GM12878 (cell line): ENCODE measurements at regions of chr11 and their contacts with region 1.

Region 1: GRCh38 chr11:58629857-58630256 is 7.4 kb downstream of the CNTF start:
- DNase-seq: no peak
- ATAC-seq: peak; percentile 86
- H3K4me3 ChIP-seq: no peak overlapping the region
- H3K27ac ChIP-seq: no peak overlapping the region
- H3K4me1 ChIP-seq: no peaks in the 10 kb centered on the region
- H3K27me3 ChIP-seq: no peaks in the 10 kb centered on the region
- CTCF ChIP-seq: peak; percentile 59 to 70 (median 66)
- EP300 ChIP-seq: no peak
- POLR2A ChIP-seq: no peak
- RAD21 ChIP-seq: peak; percentile 72

Region 2: DNA sequence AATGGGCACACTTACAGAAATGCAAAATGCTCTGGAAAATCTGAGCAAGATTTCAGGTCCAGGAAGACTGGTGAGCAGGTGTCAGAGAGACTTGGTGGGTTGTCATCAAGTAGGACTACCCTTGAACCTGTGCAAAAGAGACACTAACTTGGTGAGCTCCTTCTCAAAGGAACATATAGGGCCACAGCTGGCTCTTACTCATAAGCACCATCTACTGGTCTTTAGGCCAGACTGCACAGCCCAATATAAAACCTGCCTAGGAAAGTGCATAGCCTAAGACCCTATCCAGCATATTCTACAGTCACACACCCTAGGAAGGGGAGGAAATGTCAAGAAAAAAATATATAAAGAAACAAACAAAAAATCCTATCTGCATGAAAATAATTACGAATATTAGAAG is 343.6 kb before region 1 on chr11:
- CTCF ChIA-PET with region 1: no interaction called
- POLR2A ChIA-PET with region 1: no interaction called
- RAD21 ChIA-PET with region 1: no interaction called
- SMC1A ChIA-PET with region 1: no interaction called
- in situ Hi-C with region 1: no loop called
- intact Hi-C with region 1: no loop called
- DNase-seq: no peak
- ATAC-seq: peak; percentile 89
- H3K4me3 ChIP-seq: no peak overlapping the region
- H3K27ac ChIP-seq: no peak overlapping the region
- H3K4me1 ChIP-seq: no peaks in the 10 kb centered on the region
- H3K27me3 ChIP-seq: no peaks in the 10 kb centered on the region
- CTCF ChIP-seq: peak; percentile 61 to 68 (median 62)
- EP300 ChIP-seq: no peak
- POLR2A ChIP-seq: no peak
- RAD21 ChIP-seq: peak; percentile 65

Region 3: GRCh38 chr11:58524232-58525036 is 105.4 kb before region 1 on chr11:
- CTCF ChIA-PET with region 1: interaction called, 26 read pairs
- POLR2A ChIA-PET with region 1: no interaction called
- RAD21 ChIA-PET with region 1: interaction called, 6 read pairs
- SMC1A ChIA-PET with region 1: interaction called, 4 read pairs
- in situ Hi-C with region 1: no loop called
- intact Hi-C with region 1: no loop called
- DNase-seq: peak; percentile 39
- ATAC-seq: peak; percentile 68
- H3K4me3 ChIP-seq: peak overlapping the region; percentile 49; the same call in 1 of the 2 replicates
- H3K27ac ChIP-seq: peak overlapping the region; percentile 75
- H3K4me1 ChIP-seq: peaks cover 30% of the 10 kb centered on the region
- H3K27me3 ChIP-seq: no peaks in the 10 kb centered on the region
- CTCF ChIP-seq: peak; percentile 70 to 77 (median 72)
- EP300 ChIP-seq: no peak
- POLR2A ChIP-seq: peak; percentile 21; the same call in 1 of the 2 replicates
- RAD21 ChIP-seq: peak; percentile 72

Region 4: DNA sequence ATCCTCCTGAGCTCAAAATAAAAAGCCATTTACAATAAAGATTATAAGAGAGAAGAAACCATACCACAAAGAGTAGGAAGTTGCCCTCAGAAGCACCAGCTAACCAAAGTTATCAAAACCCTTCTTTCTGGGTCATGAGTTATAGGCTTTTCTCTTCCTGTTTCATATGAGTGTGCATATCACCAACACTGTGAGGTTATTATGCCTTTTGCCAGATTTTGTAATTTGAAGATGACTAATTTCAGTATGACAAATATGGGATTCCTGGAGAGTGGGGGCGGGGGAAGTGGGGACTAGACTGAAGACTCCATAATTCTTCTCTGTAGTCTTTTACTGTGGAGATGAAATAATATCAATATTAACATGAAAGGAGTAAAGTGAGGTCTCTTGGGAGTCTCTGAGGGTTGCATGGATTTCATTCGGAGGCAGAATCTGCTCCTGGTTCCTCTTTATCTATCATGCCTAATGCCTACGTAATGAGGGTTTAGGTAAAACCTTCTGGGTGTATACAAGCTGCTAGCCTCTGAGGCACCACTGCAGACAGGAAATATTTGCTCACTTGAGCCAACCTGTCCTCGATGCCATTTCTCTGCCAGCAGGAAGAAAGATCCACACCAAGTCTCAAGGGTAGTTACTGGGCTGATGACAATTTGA is 56.3 kb before region 1 on chr11:
- CTCF ChIA-PET with region 1: interaction called, 156 read pairs
- POLR2A ChIA-PET with region 1: interaction called, 11 read pairs
- RAD21 ChIA-PET with region 1: interaction called, 61 read pairs
- SMC1A ChIA-PET with region 1: interaction called, 73 read pairs
- in situ Hi-C with region 1: no loop called
- intact Hi-C with region 1: loop called (anchors 5 kb)
- DNase-seq: no peak
- ATAC-seq: peak; percentile 41
- H3K4me3 ChIP-seq: peak overlapping the region; percentile 77
- H3K27ac ChIP-seq: peak overlapping the region; percentile 99
- H3K4me1 ChIP-seq: peaks cover 9% of the 10 kb centered on the region
- H3K27me3 ChIP-seq: no peaks in the 10 kb centered on the region
- CTCF ChIP-seq: no peak
- EP300 ChIP-seq: peak in 1 of 2 experiments; percentile 62; a peak in 3 of 4 replicates
- POLR2A ChIP-seq: peak; percentile 69
- RAD21 ChIP-seq: no peak

Region 5: DNA sequence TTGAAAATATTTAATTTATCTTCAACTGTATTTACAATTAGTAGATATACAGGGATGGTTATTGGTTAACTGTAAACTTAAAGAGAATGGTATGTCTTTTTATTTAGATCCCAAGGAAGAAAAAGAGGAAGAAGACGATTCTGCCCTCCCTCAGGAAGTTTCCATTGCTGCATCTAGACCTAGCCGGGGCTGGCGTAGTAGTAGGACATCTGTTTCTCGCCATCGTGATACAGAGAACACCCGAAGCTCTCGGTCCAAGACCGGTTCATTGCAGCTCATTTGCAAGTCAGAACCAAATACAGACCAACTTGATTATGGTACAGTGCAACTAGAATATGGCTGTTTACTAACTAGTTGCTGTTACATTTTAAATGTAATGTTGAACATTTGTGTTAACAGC is 20.1 kb before region 1 on chr11:
- CTCF ChIA-PET with region 1: interaction called, 43 read pairs
- POLR2A ChIA-PET with region 1: interaction called, 4 read pairs
- RAD21 ChIA-PET with region 1: interaction called, 10 read pairs
- SMC1A ChIA-PET with region 1: interaction called, 9 read pairs
- in situ Hi-C with region 1: no loop called
- intact Hi-C with region 1: no loop called
- DNase-seq: no peak
- ATAC-seq: peak; percentile 40
- H3K4me3 ChIP-seq: no peak overlapping the region
- H3K27ac ChIP-seq: no peak overlapping the region
- H3K4me1 ChIP-seq: peaks cover 9% of the 10 kb centered on the region
- H3K27me3 ChIP-seq: no peaks in the 10 kb centered on the region
- CTCF ChIP-seq: no peak
- EP300 ChIP-seq: no peak
- POLR2A ChIP-seq: no peak
- RAD21 ChIP-seq: no peak

Region 6: DNA sequence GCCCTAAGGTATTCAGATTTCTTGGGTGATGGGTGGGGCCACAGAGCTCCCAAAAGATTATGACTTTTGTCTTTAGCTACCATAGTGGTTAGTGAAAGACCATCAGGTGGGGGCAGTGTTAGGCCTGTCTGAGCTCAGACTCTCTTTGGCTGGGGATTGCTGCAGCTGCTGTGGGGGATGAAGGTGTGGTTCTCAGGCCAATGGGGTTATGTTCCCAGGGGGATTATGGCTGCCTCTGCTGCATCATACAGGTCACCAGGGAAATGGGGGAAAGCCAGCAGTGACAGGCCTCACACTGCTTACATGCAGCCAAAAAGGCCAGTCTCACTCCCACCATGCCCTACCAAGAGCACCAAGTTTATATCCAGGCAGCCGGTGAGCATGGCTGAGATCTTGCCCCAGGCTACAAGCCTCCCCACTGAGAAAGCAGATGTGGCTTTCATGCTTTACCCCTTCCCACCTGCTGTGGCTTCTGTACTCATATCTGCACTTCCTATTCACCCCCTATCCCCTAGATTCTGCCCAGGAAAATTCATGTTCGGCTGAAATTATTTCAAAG is 17.4 kb after region 1 on chr11:
- CTCF ChIA-PET with region 1: interaction called, 46 read pairs
- POLR2A ChIA-PET with region 1: no interaction called
- RAD21 ChIA-PET with region 1: interaction called, 17 read pairs
- SMC1A ChIA-PET with region 1: interaction called, 26 read pairs
- in situ Hi-C with region 1: no loop called
- intact Hi-C with region 1: no loop called
- DNase-seq: peak; percentile 48
- ATAC-seq: peak; percentile 93
- H3K4me3 ChIP-seq: no peak overlapping the region
- H3K27ac ChIP-seq: peak overlapping the region; percentile 40; the same call in 1 of the 2 replicates
- H3K4me1 ChIP-seq: peaks cover 10% of the 10 kb centered on the region
- H3K27me3 ChIP-seq: no peaks in the 10 kb centered on the region
- CTCF ChIP-seq: peak in 2 of 3 experiments; percentile 21 to 40; a peak in 3 of 6 replicates
- EP300 ChIP-seq: peak; percentile 66 to 72; a peak in 2 of 4 replicates
- POLR2A ChIP-seq: no peak
- RAD21 ChIP-seq: peak; percentile 57; the same call in 1 of the 2 replicates

Region 7: GRCh38 chr11:58788355-58789023 is 158.6 kb after region 1 on chr11:
- CTCF ChIA-PET with region 1: interaction called, 10 read pairs
- POLR2A ChIA-PET with region 1: no interaction called
- RAD21 ChIA-PET with region 1: interaction called, 3 read pairs
- SMC1A ChIA-PET with region 1: interaction called, 3 read pairs
- in situ Hi-C with region 1: no loop called
- intact Hi-C with region 1: no loop called
- DNase-seq: peak; percentile 7
- ATAC-seq: peak; percentile 98
- H3K4me3 ChIP-seq: no peak overlapping the region
- H3K27ac ChIP-seq: no peak overlapping the region
- H3K4me1 ChIP-seq: no peaks in the 10 kb centered on the region
- H3K27me3 ChIP-seq: no peaks in the 10 kb centered on the region; a peak in 1 of 4 replicates
- CTCF ChIP-seq: peak; percentile 88 to 94 (median 88); a peak in 5 of 6 replicates
- EP300 ChIP-seq: no peak
- POLR2A ChIP-seq: no peak
- RAD21 ChIP-seq: peak; percentile 94